A673 (cell line): ENCODE measurements at regions of chr1 and their contacts with region 1.

Region 1: GRCh38 chr1:246699095-246699735 is 25.0 kb upstream of the SCCPDH start:
- DNase-seq: peak; percentile 94
- H3K4me3 ChIP-seq: no peak overlapping the region
- H3K27ac ChIP-seq: no peak overlapping the region
- H3K4me1 ChIP-seq: peaks cover 4% of the 10 kb centered on the region
- H3K27me3 ChIP-seq: no peaks in the 10 kb centered on the region
- CTCF ChIP-seq: peak; percentile 88

Region 2: GRCh38 chr1:246497331-246497915 is 201.8 kb before region 1 on chr1:
- CTCF ChIA-PET with region 1: interaction called, 4 read pairs
- POLR2A ChIA-PET with region 1: no interaction called
- intact Hi-C with region 1: loop called (anchors 1 kb)
- DNase-seq: peak; percentile 84
- H3K4me3 ChIP-seq: no peak overlapping the region
- H3K27ac ChIP-seq: no peak overlapping the region
- H3K4me1 ChIP-seq: no peaks in the 10 kb centered on the region
- H3K27me3 ChIP-seq: no peaks in the 10 kb centered on the region
- CTCF ChIP-seq: peak; percentile 85

Region 3: GRCh38 chr1:246566128-246566812 is 132.9 kb before region 1 on chr1 and contains the starts of genes CNST and TFB2M:
- CTCF ChIA-PET with region 1: no interaction called
- POLR2A ChIA-PET with region 1: no interaction called
- intact Hi-C with region 1: loop called (anchors 5 kb)
- DNase-seq: peak; percentile 99
- H3K4me3 ChIP-seq: peak within 1 kb of the TSS; percentile 80
- H3K27ac ChIP-seq: peak within 1 kb of the TSS; percentile 78
- H3K4me1 ChIP-seq: peaks cover 23% of the 10 kb centered on the region
- H3K27me3 ChIP-seq: no peaks in the 10 kb centered on the region
- CTCF ChIP-seq: no peak
- total RNA-seq, gene CNST: 21.0 and 25.0 TPM in 2 replicates
- total RNA-seq, gene TFB2M: 18.0 and 21.1 TPM in 2 replicates

Region 4: GRCh38 chr1:246647113-246647512 is 52.1 kb before region 1 on chr1:
- CTCF ChIA-PET with region 1: interaction called, 7 read pairs
- POLR2A ChIA-PET with region 1: no interaction called
- intact Hi-C with region 1: loop called (anchors 1 kb)
- DNase-seq: peak; percentile 94
- H3K4me3 ChIP-seq: no peak overlapping the region
- H3K27ac ChIP-seq: no peak overlapping the region
- H3K4me1 ChIP-seq: peaks cover 42% of the 10 kb centered on the region
- H3K27me3 ChIP-seq: no peaks in the 10 kb centered on the region
- CTCF ChIP-seq: peak; percentile 89

Region 5: GRCh38 chr1:246658567-246658966 is 40.6 kb before region 1 on chr1:
- CTCF ChIA-PET with region 1: no interaction called
- POLR2A ChIA-PET with region 1: no interaction called
- intact Hi-C with region 1: no loop called
- DNase-seq: no peak
- H3K4me3 ChIP-seq: no peak overlapping the region
- H3K27ac ChIP-seq: no peak overlapping the region
- H3K4me1 ChIP-seq: peaks cover 3% of the 10 kb centered on the region
- H3K27me3 ChIP-seq: no peaks in the 10 kb centered on the region
- CTCF ChIP-seq: no peak

Region 6: DNA sequence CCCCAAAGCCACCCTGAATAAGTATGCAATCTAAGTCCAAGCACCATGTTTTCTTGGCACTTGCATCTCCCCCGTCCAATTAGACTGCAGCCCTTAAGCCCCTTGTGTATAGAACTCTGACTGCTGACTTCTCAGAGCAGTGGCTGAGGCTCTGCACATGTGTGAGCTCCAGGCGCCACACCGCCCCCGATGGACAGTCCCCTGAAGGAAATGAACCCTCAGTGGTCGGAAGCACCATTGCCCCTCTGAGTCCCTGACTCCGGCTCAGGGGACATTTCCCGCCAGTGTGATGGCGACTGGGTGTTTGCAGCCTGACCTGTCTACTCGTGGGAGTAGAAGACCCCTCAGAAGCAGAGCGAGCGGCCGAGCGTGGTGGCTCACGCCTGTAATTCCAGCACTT is 12.2 kb before region 1 on chr1:
- CTCF ChIA-PET with region 1: no interaction called
- POLR2A ChIA-PET with region 1: no interaction called
- intact Hi-C with region 1: no loop called
- DNase-seq: no peak
- H3K4me3 ChIP-seq: no peak overlapping the region
- H3K27ac ChIP-seq: no peak overlapping the region
- H3K4me1 ChIP-seq: peaks cover 2% of the 10 kb centered on the region
- H3K27me3 ChIP-seq: no peaks in the 10 kb centered on the region
- CTCF ChIP-seq: no peak

Region 7: DNA sequence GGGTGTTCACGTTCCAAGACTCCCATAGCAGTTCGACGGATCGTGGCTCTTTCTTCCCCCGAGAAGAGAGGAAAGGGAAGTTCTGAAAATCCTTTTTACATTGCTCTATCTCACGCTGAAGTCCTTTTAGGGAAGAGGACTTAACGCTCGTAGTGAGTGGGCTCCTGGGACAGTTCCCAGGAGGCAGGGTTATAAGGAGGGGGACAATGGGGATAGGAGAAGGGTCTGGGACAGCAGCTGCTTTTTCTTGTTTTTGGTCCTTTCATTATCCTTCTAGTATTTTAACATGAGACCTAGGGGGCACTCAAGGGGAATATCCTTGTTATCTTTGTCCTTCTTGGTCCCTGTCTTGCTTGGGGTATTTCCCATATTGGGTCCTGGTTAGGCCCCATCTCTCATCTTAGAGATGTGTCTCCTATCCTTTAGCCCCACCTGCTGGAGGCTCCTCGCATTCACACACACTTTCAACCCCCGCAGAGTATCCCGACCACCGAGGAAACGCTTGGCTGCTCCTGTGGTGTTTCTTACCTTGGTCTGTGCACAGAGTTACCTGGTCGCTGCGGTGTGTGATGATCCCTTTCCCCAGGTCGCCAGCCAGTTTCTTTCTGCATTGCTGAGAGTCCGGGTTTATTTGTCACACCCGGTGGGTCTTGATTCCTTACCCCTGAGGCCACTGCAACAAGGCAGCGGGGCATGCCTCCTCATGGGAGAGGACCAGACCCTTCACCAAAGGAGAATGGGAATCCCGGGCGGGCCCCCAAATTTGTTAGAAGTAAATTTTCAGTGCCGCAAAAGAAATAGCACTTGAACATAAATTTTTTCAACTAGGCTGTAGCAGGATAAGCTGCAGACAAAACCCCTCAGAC is 54.7 kb after region 1 on chr1:
- CTCF ChIA-PET with region 1: no interaction called
- POLR2A ChIA-PET with region 1: no interaction called
- intact Hi-C with region 1: loop called (anchors 1 kb)
- DNase-seq: peak; percentile 74
- H3K4me3 ChIP-seq: no peak overlapping the region
- H3K27ac ChIP-seq: no peak overlapping the region
- H3K4me1 ChIP-seq: peaks cover 3% of the 10 kb centered on the region
- H3K27me3 ChIP-seq: no peaks in the 10 kb centered on the region
- CTCF ChIP-seq: peak; percentile 81